ENCODE measurements at regions of chr18 and their contacts with region 1.

Region 1: DNA sequence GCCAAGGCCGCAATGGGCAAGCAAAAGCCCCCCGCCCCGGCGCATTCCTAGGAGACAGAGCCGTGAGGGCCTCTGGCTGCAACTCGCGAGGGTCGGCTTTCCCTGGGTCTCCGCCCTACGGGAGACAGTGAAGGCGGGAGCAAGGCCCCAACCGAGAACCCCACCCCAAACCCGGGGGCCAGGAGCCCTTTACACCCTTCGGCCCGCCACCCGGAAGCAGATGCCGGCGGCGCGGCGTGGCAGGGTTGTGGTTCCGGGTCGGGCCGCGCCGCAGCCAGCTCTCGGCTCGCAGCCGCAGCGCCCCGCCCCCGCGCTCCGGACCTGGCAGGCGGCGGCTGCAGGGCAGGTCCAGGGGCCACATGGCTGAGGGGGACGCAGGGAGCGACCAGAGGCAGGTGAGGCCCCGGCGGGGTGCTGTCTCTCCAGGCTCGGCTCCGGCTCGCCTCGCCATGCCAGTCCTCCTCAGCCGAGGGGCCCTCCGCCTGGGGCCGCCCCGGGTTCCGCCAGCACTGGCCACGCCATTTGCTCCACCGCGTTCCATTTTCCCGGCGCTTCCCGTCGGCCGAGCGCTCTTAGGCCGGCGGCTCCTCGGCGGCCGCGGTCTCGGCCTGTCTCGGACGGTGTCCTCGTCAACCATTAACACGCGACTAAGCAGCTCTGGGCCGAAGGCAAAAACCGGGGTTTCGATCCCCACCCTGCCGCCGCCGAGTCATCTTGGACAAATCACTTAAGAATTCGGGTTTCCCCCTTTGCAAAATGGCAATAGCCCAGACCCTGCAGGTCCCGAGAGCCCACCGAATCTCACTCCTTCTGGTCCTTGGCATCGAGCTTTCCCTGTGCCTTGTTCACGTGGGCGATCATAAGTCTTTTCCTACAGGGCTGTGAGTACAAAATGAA is at the start of gene IMPACT:
- DNase-seq: peak; percentile 56 to 90 (median 76)
- ATAC-seq: peak; percentile 83
- H3K4me3 ChIP-seq: peak within 1 kb of the TSS; percentile 73 to 81
- H3K4me3 Mint-ChIP-seq: peak within 1 kb of the TSS; percentile 87
- H3K27ac ChIP-seq: peak within 1 kb of the TSS; percentile 43 to 64
- H3K27ac Mint-ChIP-seq: peak within 1 kb of the TSS; percentile 92
- H3K4me1 ChIP-seq: peaks cover 24% of the 10 kb centered on the region
- H3K4me1 Mint-ChIP-seq: peaks cover 21% of the 10 kb centered on the region
- H3K27me3 ChIP-seq: peaks cover 0 to 3% of the 10 kb centered on the region in 2 experiments
- H3K27me3 Mint-ChIP-seq: peaks cover 25% of the 10 kb centered on the region
- CTCF ChIP-seq: no peak
- total RNA-seq, gene IMPACT: 6.5 to 10.0 TPM

Region 2: GRCh38 chr18:22742409-22742808 is 1684.2 kb before region 1 on chr18:
- CTCF ChIA-PET with region 1: no interaction called
- POLR2A ChIA-PET with region 1: no interaction called
- intact Hi-C with region 1: no loop called
- DNase-seq: no peak
- ATAC-seq: no peak
- H3K4me3 ChIP-seq: no peak overlapping the region
- H3K4me3 Mint-ChIP-seq: no peak overlapping the region
- H3K27ac ChIP-seq: no peak overlapping the region
- H3K27ac Mint-ChIP-seq: no peak overlapping the region
- H3K4me1 ChIP-seq: no peaks in the 10 kb centered on the region
- H3K4me1 Mint-ChIP-seq: no peaks in the 10 kb centered on the region
- H3K27me3 ChIP-seq: no peaks in the 10 kb centered on the region
- H3K27me3 Mint-ChIP-seq: peaks cover 16% of the 10 kb centered on the region
- CTCF ChIP-seq: no peak

Region 3: GRCh38 chr18:24397694-24398365 is 28.8 kb before region 1 on chr18 and contains the start of gene OSBPL1A:
- CTCF ChIA-PET with region 1: interaction called, 3 read pairs
- POLR2A ChIA-PET with region 1: no interaction called
- intact Hi-C with region 1: loop called in 1 of 2 experiments (anchors 2 kb)
- DNase-seq: peak; percentile 60 to 85 (median 79)
- ATAC-seq: peak; percentile 87
- H3K4me3 ChIP-seq: peak within 1 kb of the TSS; percentile 51 to 54
- H3K4me3 Mint-ChIP-seq: peak within 1 kb of the TSS; percentile 87
- H3K27ac ChIP-seq: no peak within 1 kb of the TSS
- H3K27ac Mint-ChIP-seq: no peak within 1 kb of the TSS
- H3K4me1 ChIP-seq: peaks cover 6% of the 10 kb centered on the region
- H3K4me1 Mint-ChIP-seq: peaks cover 15% of the 10 kb centered on the region
- H3K27me3 ChIP-seq: peaks cover 0 to 2% of the 10 kb centered on the region in 2 experiments
- H3K27me3 Mint-ChIP-seq: peaks cover 19% of the 10 kb centered on the region
- CTCF ChIP-seq: no peak
- total RNA-seq, gene OSBPL1A: 1.3 to 1.6 TPM

Region 4: GRCh38 chr18:24446953-24447538 is 20.4 kb after region 1 on chr18:
- CTCF ChIA-PET with region 1: no interaction called
- POLR2A ChIA-PET with region 1: no interaction called
- intact Hi-C with region 1: no loop called
- DNase-seq: no peak
- ATAC-seq: no peak
- H3K4me3 ChIP-seq: no peak overlapping the region
- H3K4me3 Mint-ChIP-seq: no peak overlapping the region
- H3K27ac ChIP-seq: no peak overlapping the region
- H3K27ac Mint-ChIP-seq: no peak overlapping the region
- H3K4me1 ChIP-seq: no peaks in the 10 kb centered on the region
- H3K4me1 Mint-ChIP-seq: no peaks in the 10 kb centered on the region
- H3K27me3 ChIP-seq: no peaks in the 10 kb centered on the region
- H3K27me3 Mint-ChIP-seq: no peaks in the 10 kb centered on the region
- CTCF ChIP-seq: no peak